Prostate gland (tissue), 2 donors: ENCODE measurements at regions of chr5 and their contacts with region 1.

Region 1: GRCh38 chr5:140639148-140639979 is at the start of gene TMCO6:
- DNase-seq: peak; percentile 97
- H3K4me3 ChIP-seq: peak within 1 kb of the TSS; percentile 58 to 68
- H3K27ac ChIP-seq: peak within 1 kb of the TSS; percentile 84 to 85
- H3K4me1 ChIP-seq: no peaks in the 10 kb centered on the region
- H3K27me3 ChIP-seq: no peaks in the 10 kb centered on the region
- CTCF ChIP-seq: peak; percentile 24 to 66 (median 57)
- POLR2A ChIP-seq: peak; percentile 83
- total RNA-seq, gene TMCO6: 45.6 to 124 TPM

Region 2: DNA sequence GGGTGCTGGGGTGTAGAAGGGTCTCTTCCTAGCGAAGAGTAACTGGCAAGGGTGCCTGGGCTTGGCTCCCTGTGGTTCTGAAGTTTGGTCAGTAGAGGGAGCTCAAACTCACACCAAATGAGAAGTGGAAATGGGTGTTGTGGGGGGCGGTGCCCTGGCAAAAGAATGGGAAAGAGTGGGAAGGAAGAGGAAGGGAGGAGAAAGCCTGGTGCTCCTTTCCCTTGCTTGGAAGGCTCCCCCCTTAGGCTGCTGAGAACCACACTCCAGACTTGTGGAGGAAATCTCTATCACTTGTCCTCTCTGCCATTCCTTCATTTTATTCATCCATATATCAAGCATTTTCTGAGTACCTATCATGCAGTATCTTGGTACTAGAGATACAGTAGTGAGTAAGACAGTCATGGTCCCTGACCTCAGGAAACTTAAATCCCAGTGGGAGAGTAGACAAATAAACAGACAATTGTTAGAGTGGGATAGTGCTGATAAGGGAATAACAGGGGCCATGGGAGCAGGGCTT is 266.3 kb before region 1 on chr5:
- intact Hi-C with region 1: loop called (anchors 10 kb)
- DNase-seq: peak; percentile 37
- H3K4me3 ChIP-seq: no peak overlapping the region
- H3K27ac ChIP-seq: no peak overlapping the region
- H3K4me1 ChIP-seq: no peaks in the 10 kb centered on the region
- H3K27me3 ChIP-seq: no peaks in the 10 kb centered on the region
- CTCF ChIP-seq: peak; percentile 36 to 78 (median 60)
- POLR2A ChIP-seq: no peak

Region 3: GRCh38 chr5:140401362-140402257 is 237.8 kb before region 1 on chr5 and contains the start of gene ANKHD1:
- intact Hi-C with region 1: loop called (anchors 5 kb)
- DNase-seq: peak; percentile 100
- H3K4me3 ChIP-seq: peak within 1 kb of the TSS; percentile 93 to 96
- H3K27ac ChIP-seq: peak within 1 kb of the TSS; percentile 95
- H3K4me1 ChIP-seq: no peaks in the 10 kb centered on the region
- H3K27me3 ChIP-seq: no peaks in the 10 kb centered on the region
- CTCF ChIP-seq: peak in 2 of 4 experiments; percentile 48 to 62
- POLR2A ChIP-seq: peak; percentile 99
- total RNA-seq, gene ANKHD1: 69.7 to 112 TPM

Region 4: DNA sequence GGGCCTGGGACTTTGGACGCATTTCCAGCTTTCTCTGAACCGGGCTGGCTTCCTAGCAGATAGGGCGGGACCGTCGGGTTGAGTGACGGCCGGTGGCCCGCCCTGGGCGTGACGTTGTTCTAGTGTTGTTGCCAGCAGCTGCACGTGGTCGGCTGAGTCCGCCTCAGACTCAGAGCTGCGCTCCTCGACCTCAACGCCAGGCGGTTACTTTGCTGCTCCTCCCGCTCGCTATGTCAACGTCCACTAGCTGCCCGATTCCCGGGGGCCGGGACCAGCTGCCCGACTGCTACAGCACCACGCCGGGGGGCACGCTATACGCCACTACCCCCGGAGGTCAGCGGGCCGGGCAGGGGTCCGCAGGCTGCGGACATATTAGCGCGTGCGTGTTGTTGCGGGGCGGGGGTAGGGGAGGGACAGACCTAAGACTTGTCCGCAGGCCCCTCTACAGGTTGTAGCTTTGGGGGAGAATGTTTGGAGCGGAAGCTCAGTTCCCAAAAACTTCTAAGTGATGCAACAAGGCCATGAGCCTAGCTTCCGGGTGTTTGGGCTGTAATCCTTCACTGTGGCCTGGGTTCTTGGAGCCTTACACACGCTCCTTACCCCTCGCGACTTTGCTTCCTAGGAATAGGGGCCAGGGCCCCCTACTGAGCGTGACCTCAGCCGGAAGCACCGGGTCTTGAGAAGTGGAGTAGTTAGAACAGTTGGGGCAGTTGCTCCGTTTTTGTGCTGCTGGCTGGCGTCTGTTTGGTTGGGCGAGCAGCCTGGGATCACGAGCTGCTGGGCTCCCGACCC is 91.7 kb before region 1 on chr5 and contains the start of gene EIF4EBP3:
- intact Hi-C with region 1: loop called (anchors 5 kb)
- DNase-seq: peak; percentile 98
- H3K4me3 ChIP-seq: peak within 1 kb of the TSS; percentile 43 to 45
- H3K27ac ChIP-seq: peak within 1 kb of the TSS; percentile 94 to 97
- H3K4me1 ChIP-seq: peaks cover 21% of the 10 kb centered on the region
- H3K27me3 ChIP-seq: no peaks in the 10 kb centered on the region
- CTCF ChIP-seq: peak; percentile 32 to 84 (median 66)
- POLR2A ChIP-seq: peak; percentile 93
- total RNA-seq, gene EIF4EBP3: 28.3 to 41.4 TPM